Activated CD4-positive, alpha-beta memory T cell treated with anti-CD3 and anti-CD28 coated beads for 36 hours (primary cell): ENCODE measurements at regions of chr2 and their contacts with region 1.

Region 1: DNA sequence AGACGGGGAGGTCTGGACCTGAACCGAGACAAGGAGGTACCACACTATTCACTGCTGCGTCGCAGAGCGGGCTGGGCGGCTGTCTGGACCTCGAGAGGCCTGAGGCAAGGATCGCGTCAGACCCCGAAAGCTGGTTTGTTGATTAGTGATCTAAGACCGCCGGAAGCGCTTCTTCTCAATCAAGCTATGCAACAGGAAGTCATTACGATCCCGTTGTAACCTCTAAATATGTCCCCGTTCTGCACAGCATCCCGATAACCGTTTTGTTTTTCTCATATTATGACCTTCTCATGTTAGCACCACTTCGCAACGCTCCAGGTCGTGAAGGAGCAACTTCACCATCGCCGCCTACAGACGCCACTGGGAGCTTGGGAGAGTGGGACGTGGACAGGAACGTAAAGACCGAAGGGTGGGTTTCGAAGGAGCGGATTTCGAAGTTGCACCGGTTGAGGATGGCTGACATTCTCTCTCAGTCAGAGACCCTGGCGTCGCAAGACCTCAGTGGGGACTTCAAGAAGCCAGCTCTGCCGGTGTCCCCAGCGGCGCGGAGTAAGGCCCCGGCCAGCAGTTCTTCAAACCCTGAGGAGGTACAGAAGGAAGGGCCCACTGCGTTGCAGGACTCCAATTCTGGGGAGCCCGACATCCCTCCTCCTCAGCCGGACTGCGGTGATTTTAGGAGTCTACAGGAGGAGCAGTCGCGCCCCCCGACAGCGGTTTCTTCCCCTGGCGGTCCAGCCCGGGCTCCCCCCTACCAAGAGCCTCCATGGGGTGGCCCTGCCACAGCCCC is at the starts of genes SLC4A1AP and SUPT7L:
- DNase-seq: peak; percentile 81
- H3K4me3 Mint-ChIP-seq: peak within 1 kb of the TSS; percentile 99
- H3K27ac Mint-ChIP-seq: peak within 1 kb of the TSS; percentile 100
- H3K4me1 Mint-ChIP-seq: peaks cover 50% of the 10 kb centered on the region
- H3K27me3 Mint-ChIP-seq: no peaks in the 10 kb centered on the region
- total RNA-seq, gene SLC4A1AP: 26.5 TPM
- total RNA-seq, gene SUPT7L: 30.1 to 30.3 TPM

Region 2: DNA sequence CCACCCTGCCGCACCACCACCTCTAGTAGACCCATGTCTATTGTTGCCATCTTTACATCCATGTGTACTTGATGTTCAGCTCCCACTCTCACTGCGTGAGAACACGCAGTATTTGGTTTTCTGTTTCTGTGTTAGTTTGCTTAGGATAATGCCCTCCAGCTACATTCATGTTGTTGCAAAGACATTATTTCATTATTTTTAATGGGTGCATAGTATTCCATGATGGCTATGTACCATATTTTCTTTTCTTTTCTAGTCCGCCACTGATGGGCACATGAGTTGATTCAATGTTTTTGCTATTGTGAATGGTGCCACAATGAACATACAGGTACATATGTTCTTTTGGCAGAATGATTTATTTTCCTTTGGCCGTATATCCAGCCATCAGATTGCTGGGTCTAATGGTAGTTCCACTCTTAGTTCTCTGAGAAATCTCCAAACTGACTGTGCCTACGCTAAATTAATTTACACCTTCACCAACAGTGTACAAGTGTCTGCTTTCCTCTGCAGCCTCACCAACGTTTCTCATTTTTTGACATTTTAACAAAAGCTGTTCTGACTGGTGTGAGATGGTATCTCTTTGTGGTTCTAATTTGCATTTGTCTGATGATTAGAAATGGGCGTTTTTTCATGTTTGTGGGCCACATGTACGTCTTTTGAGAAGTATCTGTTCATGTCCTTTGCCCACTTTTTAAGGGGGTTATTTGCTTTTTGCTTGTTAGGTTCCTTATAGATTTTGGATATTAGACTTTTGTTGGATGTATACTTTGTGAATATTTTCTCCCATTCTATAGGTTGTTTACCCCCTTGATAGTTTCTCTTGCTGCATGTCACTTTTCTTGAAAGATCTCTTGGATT is 272.6 kb before region 1 on chr2:
- CTCF ChIA-PET with region 1: no interaction called
- POLR2A ChIA-PET with region 1: no interaction called
- intact Hi-C with region 1: no loop called
- DNase-seq: no peak
- H3K4me3 Mint-ChIP-seq: peak overlapping the region; percentile 3
- H3K27ac Mint-ChIP-seq: peak overlapping the region; percentile 67
- H3K4me1 Mint-ChIP-seq: peaks cover 25% of the 10 kb centered on the region
- H3K27me3 Mint-ChIP-seq: no peaks in the 10 kb centered on the region

Region 3: GRCh38 chr2:27446057-27446456 is 217.6 kb before region 1 on chr2:
- CTCF ChIA-PET with region 1: no interaction called
- POLR2A ChIA-PET with region 1: no interaction called
- intact Hi-C with region 1: no loop called
- DNase-seq: peak; percentile 27
- H3K4me3 Mint-ChIP-seq: no peak overlapping the region
- H3K27ac Mint-ChIP-seq: no peak overlapping the region
- H3K4me1 Mint-ChIP-seq: peaks cover 2% of the 10 kb centered on the region
- H3K27me3 Mint-ChIP-seq: no peaks in the 10 kb centered on the region

Region 4: DNA sequence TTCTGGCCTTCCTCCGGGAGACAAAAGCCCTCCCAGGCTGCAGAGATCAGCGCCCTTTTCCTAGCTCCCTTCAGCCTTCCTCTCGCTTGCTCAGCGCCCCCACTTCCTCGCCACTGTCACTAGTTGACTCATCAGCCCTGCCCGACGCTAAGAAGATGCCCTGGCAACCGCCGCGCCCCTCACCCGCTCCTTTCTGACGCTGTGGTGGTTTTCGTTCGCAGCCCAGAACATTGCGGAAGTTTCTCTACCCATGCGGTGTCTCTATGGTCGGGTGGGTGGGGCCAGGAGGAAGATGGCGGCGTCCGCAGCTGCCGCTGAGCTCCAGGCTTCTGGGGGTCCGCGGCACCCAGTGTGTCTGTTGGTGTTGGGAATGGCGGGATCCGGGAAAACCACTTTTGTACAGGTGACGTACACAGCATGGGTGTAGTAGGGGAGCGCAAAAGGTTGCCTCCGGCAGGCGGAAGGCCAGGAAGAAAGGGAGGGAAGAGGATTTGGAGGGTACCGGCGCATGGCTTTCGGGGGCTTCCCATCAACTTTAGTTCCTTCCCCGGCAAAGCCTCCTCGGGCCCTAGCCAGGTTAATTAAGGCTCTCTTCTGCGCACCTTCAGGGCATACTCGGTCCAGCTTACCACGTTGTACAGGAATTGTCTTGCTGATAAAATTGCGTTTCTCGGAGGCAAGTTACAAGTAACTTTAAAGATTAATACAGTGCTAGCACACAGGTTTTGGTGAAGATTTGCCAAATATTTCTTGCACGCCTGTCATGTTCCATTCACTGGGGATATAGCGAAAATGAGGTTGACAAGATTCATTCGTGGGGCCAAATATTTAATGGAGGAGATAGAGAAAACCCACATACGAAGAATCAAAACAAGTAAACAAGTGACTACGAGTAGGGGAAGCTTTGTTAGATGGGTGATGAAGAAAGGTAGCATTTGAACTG is 34.6 kb before region 1 on chr2 and contains the starts of genes CCDC121 and GPN1:
- CTCF ChIA-PET with region 1: interaction called, 3 read pairs
- POLR2A ChIA-PET with region 1: interaction called, 6 read pairs
- intact Hi-C with region 1: loop called (anchors 1 kb)
- DNase-seq: peak; percentile 98
- H3K4me3 Mint-ChIP-seq: no peak within 1 kb of the TSS
- H3K27ac Mint-ChIP-seq: no peak within 1 kb of the TSS
- H3K4me1 Mint-ChIP-seq: peaks cover 35% of the 10 kb centered on the region
- H3K27me3 Mint-ChIP-seq: no peaks in the 10 kb centered on the region
- total RNA-seq, gene CCDC121: 0.34 to 0.36 TPM
- total RNA-seq, gene GPN1: 54.4 to 56.8 TPM

Region 5: DNA sequence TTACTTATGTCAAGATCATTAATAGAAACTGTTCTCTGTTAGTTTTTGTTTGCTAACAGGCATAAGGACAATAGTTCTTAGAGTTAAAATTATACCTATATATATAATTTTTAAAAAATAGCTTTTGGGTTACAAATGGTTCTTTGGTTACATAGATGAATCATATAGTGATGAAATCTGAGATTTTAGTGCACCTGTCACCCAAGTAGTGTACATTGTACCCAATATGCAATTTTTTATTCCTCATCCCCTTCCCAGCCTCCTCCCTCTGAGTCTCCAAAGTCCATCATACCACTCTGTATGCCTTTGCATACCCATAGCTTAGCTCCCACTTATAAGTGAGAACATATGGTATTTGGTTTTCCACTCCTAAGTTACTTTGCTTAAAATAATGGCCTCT is 26.4 kb after region 1 on chr2:
- CTCF ChIA-PET with region 1: no interaction called
- POLR2A ChIA-PET with region 1: no interaction called
- intact Hi-C with region 1: no loop called
- DNase-seq: no peak
- H3K4me3 Mint-ChIP-seq: no peak overlapping the region
- H3K27ac Mint-ChIP-seq: no peak overlapping the region
- H3K4me1 Mint-ChIP-seq: peaks cover 4% of the 10 kb centered on the region
- H3K27me3 Mint-ChIP-seq: no peaks in the 10 kb centered on the region